Activated T-helper 1 cell treated with anti-CD3 and anti-CD28 coated beads, Interleukin-12 subunit alpha, Interleukin-12 subunit beta, Interleukin-2, Interleukin-4 antibody, amounts not matched to agents 30 ng/mL and 10 ng/mL and 1 ng/mL, durations not matched to agents 14 hours and 24 hours and 36 hours (primary cell): ENCODE measurements at regions of chr12 and their contacts with region 1.

Region 1: DNA sequence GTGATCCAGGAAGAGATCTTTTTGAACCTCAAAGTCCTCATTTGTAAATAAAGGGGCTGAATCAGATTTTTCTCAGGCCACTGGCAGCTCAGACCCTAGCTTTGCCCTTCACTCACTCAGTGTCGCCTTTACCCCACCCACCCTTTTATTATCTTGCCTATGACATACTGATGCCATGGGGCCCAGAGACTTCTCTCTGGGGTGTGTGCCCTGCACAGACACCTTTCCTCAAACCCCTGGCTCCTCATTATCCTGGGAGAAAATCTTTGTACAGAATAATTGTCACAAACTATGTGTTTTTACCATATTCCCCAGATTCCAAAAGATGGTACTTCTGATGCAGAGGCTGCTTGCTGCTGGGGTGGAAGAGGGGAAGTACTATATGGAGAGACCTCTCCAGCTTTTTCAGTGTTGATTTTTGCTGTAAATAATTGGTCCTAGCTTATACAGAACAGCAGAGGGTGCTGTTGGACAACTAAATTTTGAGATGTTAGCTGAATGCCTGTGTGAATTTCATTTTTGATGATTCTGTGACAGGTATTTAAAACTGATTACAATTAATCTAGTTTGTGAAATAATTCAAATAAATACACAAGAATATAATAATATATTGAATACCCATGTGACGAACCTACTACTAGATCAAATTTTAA is 53.9 kb upstream of the DCD start:
- DNase-seq: no peak
- H3K4me3 Mint-ChIP-seq: no peak overlapping the region
- H3K27ac Mint-ChIP-seq: no peak overlapping the region
- H3K4me1 Mint-ChIP-seq: no peaks in the 10 kb centered on the region
- H3K27me3 Mint-ChIP-seq: peaks cover 10% of the 10 kb centered on the region

Region 2: GRCh38 chr12:54641554-54641953 is 60.5 kb before region 1 on chr12:
- intact Hi-C with region 1: no loop called
- DNase-seq: no peak
- H3K4me3 Mint-ChIP-seq: no peak overlapping the region
- H3K27ac Mint-ChIP-seq: no peak overlapping the region
- H3K4me1 Mint-ChIP-seq: peaks cover 5% of the 10 kb centered on the region
- H3K27me3 Mint-ChIP-seq: peaks cover 13% of the 10 kb centered on the region

Region 3: DNA sequence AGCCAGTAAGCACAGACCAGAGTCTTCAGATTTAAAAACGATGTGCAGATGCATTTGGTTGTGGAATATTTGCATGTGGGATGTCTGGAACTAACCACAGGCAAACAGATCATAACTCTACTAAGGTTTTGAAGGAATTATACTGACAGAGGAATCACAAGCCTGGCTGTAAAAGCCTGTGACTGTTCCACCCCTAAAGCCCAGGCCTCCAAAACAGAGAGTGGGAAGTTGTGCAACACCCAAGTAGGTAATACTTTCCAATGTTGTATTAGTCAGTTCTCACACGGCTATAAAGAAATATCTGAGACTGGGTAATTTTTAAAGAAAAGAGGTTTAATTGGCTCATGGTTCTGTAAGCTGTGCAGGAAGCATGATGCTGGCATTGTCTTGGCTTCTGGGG is 14.2 kb after region 1 on chr12:
- intact Hi-C with region 1: no loop called
- DNase-seq: no peak
- H3K4me3 Mint-ChIP-seq: no peak overlapping the region
- H3K27ac Mint-ChIP-seq: no peak overlapping the region
- H3K4me1 Mint-ChIP-seq: no peaks in the 10 kb centered on the region
- H3K27me3 Mint-ChIP-seq: peaks cover 21% of the 10 kb centered on the region

Region 4: DNA sequence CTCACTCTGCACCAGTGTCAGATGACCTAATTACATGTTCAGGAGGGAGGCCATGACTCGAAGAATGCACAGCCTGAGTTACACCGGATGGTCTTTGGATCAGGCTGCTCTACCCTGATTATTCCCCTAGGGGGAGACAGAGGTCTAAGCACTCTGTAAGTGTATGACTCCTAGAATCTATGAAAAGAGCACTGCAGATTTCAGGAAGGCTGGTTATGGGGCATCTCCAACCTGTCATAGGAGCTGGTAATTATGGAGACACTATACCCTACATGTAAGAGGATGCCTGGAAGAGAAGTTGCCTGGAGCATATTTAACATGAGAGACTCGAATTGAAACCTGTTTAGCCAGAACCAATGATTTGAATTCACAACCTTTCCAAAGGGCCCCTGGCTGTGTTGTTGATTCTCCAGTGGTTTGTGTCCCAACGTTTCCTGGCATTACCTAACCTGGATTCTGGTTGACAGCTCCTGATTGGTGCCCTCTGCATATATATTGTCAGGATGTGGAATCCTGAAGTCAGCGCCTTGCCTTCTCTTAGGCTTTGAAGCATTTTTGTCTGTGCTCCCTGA is 152.0 kb after region 1 on chr12 and contains the start of gene MUCL1:
- intact Hi-C with region 1: loop called (anchors 2 kb)
- DNase-seq: peak; percentile 66
- H3K4me3 Mint-ChIP-seq: no peak within 1 kb of the TSS
- H3K27ac Mint-ChIP-seq: no peak within 1 kb of the TSS
- H3K4me1 Mint-ChIP-seq: peaks cover 15% of the 10 kb centered on the region
- H3K27me3 Mint-ChIP-seq: peaks cover 1% of the 10 kb centered on the region
- total RNA-seq, gene MUCL1: not detected in 2 replicates

Region 5: DNA sequence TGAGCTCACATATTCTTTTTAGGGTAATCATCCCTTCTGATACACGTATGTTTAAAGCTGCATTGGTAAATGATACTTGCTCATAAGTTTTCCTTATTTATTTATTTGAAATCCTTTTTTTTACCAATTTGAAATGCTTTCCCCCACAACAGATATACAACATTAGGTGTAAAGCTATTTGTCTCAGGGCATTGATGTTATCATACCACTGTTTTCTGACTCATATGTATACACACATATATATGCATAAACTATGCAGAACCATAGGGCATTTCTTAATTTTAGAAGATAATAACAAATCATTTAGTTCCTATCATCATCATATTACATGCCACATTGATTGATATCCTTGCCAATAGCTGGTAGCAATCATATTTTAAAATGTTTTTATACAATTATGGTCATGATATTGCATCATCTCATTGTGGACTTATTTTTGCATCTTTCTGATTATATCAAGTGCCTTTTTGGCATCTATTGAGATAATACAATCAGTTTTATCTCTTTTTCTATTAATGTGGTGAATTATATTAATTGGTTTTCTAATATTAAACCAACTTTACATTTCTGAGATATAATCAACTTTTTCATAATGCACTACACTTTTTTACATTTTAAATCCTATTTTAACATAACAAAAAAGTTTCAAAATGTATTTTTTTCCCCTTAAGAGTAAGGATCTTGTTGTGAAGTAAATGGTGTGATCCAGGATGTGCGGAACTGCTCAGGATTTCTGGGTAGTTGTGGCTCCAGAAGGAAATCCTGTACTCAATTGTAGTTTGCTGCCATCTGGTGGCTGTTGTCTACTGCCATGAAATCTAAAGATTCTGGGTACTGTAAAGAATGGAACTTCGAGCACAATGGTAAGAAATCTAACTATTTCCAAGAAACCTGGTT is 440.9 kb after region 1 on chr12:
- intact Hi-C with region 1: loop called (anchors 1 kb)
- DNase-seq: peak; percentile 9
- H3K4me3 Mint-ChIP-seq: no peak overlapping the region
- H3K27ac Mint-ChIP-seq: no peak overlapping the region
- H3K4me1 Mint-ChIP-seq: no peaks in the 10 kb centered on the region
- H3K27me3 Mint-ChIP-seq: peaks cover 5% of the 10 kb centered on the region

Region 6: DNA sequence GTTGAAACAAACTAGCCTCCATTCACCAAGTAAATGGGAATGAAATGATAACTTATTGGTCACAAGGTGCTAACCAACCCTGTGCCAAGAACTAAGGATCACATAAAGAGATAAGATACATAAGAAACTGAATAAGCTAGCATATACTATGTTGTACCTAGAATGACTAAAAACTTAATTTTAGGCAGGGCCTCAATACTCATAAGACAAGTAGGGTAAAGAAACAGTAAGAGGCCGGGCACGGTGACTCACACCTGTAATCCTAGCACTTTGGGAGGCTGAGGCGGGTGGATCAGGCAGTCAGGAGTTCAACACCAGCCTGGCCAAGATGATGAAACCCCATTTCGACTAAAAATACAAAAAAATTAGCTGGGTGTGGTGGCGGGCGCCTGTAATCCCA is 1058.6 kb after region 1 on chr12:
- intact Hi-C with region 1: no loop called
- DNase-seq: no peak
- H3K4me3 Mint-ChIP-seq: no peak overlapping the region
- H3K27ac Mint-ChIP-seq: peak overlapping the region; percentile 69
- H3K4me1 Mint-ChIP-seq: peaks cover 11% of the 10 kb centered on the region
- H3K27me3 Mint-ChIP-seq: no peaks in the 10 kb centered on the region